HCT116 (cell line): ENCODE measurements at regions of chr6 and their contacts with region 1.

Region 1: GRCh38 chr6:17086469-17086868 is 15.4 kb upstream of the STMND1 start:
- DNase-seq: peak; percentile 75
- ATAC-seq: peak; percentile 97
- H3K4me3 ChIP-seq: no peak overlapping the region
- H3K27ac ChIP-seq: no peak overlapping the region
- H3K4me1 ChIP-seq: peaks cover 0 to 4% of the 10 kb centered on the region in 2 experiments; a peak in 1 of 4 replicates
- H3K27me3 ChIP-seq: no peaks in the 10 kb centered on the region
- CTCF ChIP-seq: peak; percentile 63 to 77 (median 72); a peak in 5 of 6 replicates
- POLR2A ChIP-seq: no peak
- RAD21 ChIP-seq: peak; percentile 83

Region 2: GRCh38 chr6:16286148-16286522 is 800.3 kb before region 1 on chr6:
- CTCF ChIA-PET with region 1: interaction called, 8 read pairs
- POLR2A ChIA-PET with region 1: no interaction called
- RAD21 ChIA-PET with region 1: no interaction called
- intact Hi-C with region 1: loop called (anchors 2 kb)
- DNase-seq: peak; percentile 6
- ATAC-seq: peak; percentile 92
- H3K4me3 ChIP-seq: no peak overlapping the region
- H3K27ac ChIP-seq: no peak overlapping the region
- H3K4me1 ChIP-seq: no peaks in the 10 kb centered on the region
- H3K27me3 ChIP-seq: no peaks in the 10 kb centered on the region
- CTCF ChIP-seq: peak; percentile 68 to 97 (median 91)
- POLR2A ChIP-seq: no peak
- RAD21 ChIP-seq: peak; percentile 77

Region 3: DNA sequence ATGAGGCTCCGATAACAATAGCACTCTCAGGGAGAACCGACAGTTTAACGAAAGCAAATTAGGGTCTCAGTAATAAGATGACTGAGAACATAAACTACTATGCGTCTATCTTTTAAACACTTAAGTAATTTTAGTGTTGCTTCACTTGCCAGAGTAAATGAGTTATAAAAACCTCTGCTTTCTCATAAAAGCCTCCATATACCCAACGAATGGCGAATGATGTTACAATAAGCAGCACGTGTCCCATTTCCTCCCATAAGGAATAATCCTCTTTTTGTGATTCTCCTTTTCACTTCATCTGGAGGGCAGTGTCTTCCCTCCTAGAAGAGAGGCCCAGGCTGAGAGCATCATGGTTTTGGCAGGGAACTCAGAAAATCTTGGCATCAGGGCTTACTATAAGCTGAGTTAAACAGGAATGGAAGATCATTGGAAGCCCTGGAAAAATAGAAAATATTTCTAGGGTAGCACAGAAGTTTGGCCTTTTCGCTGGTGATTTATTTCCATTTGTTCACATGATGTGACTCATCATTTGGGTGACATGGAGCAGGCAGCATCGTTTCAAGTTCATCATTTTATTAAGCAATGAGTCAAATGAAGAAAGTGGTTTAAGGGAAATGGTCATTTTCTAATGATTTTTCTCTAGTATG is 580.6 kb before region 1 on chr6:
- CTCF ChIA-PET with region 1: interaction called, 7 read pairs
- POLR2A ChIA-PET with region 1: no interaction called
- RAD21 ChIA-PET with region 1: no interaction called
- intact Hi-C with region 1: loop called (anchors 5 kb)
- DNase-seq: no peak
- ATAC-seq: no peak
- H3K4me3 ChIP-seq: no peak overlapping the region
- H3K27ac ChIP-seq: no peak overlapping the region
- H3K4me1 ChIP-seq: peaks cover 0 to 2% of the 10 kb centered on the region in 2 experiments; a peak in 1 of 4 replicates
- H3K27me3 ChIP-seq: no peaks in the 10 kb centered on the region
- CTCF ChIP-seq: no peak
- POLR2A ChIP-seq: no peak
- RAD21 ChIP-seq: no peak

Region 4: DNA sequence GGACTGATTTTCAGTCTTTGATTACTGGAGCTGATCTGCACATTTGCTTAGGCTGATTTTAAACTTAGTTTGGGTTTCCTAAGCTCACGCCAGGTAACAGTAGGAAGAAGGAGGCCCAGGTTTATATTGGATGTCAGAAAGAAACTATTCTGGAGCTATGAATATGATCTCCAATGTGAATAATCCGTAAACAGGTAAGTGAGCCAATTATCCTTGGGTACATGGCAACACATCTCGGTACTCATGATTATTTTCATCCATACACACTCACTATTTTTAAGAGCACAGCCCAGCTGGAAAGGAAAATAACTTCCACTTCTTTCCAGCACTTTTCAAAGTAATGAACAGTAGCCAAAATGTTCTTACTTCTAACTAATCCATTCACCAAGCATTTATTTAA is 332.2 kb before region 1 on chr6:
- CTCF ChIA-PET with region 1: no interaction called
- POLR2A ChIA-PET with region 1: no interaction called
- RAD21 ChIA-PET with region 1: no interaction called
- intact Hi-C with region 1: no loop called
- DNase-seq: no peak
- ATAC-seq: no peak
- H3K4me3 ChIP-seq: no peak overlapping the region
- H3K27ac ChIP-seq: no peak overlapping the region
- H3K4me1 ChIP-seq: peaks cover 27 to 34% of the 10 kb centered on the region in 2 experiments
- H3K27me3 ChIP-seq: no peaks in the 10 kb centered on the region
- CTCF ChIP-seq: no peak
- POLR2A ChIP-seq: no peak
- RAD21 ChIP-seq: no peak

Region 5: GRCh38 chr6:16849280-16849987 is 237.0 kb before region 1 on chr6:
- CTCF ChIA-PET with region 1: no interaction called
- POLR2A ChIA-PET with region 1: no interaction called
- RAD21 ChIA-PET with region 1: no interaction called
- intact Hi-C with region 1: no loop called
- DNase-seq: no peak
- ATAC-seq: no peak
- H3K4me3 ChIP-seq: no peak overlapping the region
- H3K27ac ChIP-seq: no peak overlapping the region
- H3K4me1 ChIP-seq: peaks cover 7 to 13% of the 10 kb centered on the region in 2 experiments
- H3K27me3 ChIP-seq: no peaks in the 10 kb centered on the region
- CTCF ChIP-seq: no peak
- POLR2A ChIP-seq: no peak
- RAD21 ChIP-seq: no peak